Panc1 (cell line): ENCODE measurements at regions of chr12 and their contacts with region 1.

Region 1: DNA sequence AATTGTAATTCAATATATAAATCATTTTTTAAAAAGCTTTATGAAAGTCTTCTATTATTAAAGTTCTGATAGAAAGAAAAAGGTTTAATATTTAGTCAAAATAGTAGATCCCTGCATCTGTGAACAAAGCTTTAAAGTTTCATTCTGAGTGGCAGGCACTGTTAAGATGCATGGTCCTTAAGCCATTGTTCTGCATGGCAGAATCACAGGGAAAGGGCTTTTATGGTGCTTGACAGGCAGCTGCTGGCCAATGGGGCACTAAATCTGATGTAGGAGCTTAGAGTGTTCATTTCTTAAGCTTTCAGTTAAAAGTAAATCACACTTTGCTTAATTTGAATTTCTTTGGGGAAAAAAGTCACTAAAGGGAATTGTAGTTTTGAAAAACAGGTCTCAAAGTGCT is 148.2 kb downstream of the PLEKHA5 start:
- DNase-seq: no peak
- ATAC-seq: no peak
- H3K4me3 ChIP-seq: no peak overlapping the region
- H3K27ac ChIP-seq: no peak overlapping the region
- H3K4me1 ChIP-seq: peaks cover 11% of the 10 kb centered on the region
- H3K27me3 ChIP-seq: no peaks in the 10 kb centered on the region
- CTCF ChIP-seq: no peak

Region 2: DNA sequence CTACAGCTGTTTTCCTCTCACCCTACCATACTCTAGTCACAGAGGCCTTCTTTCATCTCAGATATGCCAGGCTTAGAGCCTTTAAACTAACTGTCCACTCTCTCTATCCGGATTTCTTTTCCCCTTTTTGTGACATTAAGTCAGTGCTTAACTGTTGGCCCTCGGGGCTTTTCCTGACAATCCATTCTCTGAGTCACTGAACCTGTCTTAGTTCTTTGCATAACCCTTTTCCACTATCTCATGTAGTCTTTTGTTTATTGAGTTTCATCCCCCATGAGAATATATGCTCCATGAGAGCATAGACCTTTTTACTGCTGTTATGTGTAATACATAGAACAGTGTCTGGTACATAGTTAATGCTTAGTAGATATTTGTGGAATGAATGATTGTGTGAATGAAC is 79.4 kb before region 1 on chr12:
- CTCF ChIA-PET with region 1: no interaction called
- POLR2A ChIA-PET with region 1: no interaction called
- in situ Hi-C with region 1: no loop called
- intact Hi-C with region 1: no loop called
- DNase-seq: no peak
- ATAC-seq: no peak
- H3K4me3 ChIP-seq: no peak overlapping the region
- H3K27ac ChIP-seq: no peak overlapping the region
- H3K4me1 ChIP-seq: no peaks in the 10 kb centered on the region
- H3K27me3 ChIP-seq: no peaks in the 10 kb centered on the region
- CTCF ChIP-seq: no peak

Region 3: DNA sequence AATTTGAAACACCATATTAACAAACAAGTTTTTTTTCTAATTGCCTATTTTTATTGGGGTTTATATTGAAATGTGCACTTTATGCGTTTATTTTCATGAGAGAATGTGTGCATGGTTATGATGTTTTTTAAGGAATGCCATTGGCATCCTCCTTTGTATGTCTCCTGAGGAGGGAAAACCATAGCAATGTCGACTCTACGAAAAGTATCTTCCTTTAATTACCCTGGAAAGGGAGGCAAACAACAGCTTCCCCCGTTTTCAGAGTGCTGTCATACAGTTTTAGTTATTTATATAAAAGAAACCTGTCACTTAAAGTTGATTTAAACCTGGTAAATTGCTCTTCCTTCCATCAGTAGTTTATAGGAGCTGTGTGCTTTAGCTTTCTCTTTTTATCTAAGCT is 30.8 kb before region 1 on chr12:
- CTCF ChIA-PET with region 1: no interaction called
- POLR2A ChIA-PET with region 1: interaction called, 23 read pairs
- in situ Hi-C with region 1: no loop called
- intact Hi-C with region 1: no loop called
- DNase-seq: no peak
- ATAC-seq: no peak
- H3K4me3 ChIP-seq: no peak overlapping the region
- H3K27ac ChIP-seq: no peak overlapping the region
- H3K4me1 ChIP-seq: no peaks in the 10 kb centered on the region
- H3K27me3 ChIP-seq: no peaks in the 10 kb centered on the region
- CTCF ChIP-seq: no peak

Region 4: GRCh38 chr12:19323805-19324204 is 46.1 kb after region 1 on chr12:
- CTCF ChIA-PET with region 1: no interaction called
- POLR2A ChIA-PET with region 1: no interaction called
- in situ Hi-C with region 1: no loop called
- intact Hi-C with region 1: no loop called
- DNase-seq: no peak
- ATAC-seq: no peak
- H3K4me3 ChIP-seq: no peak overlapping the region
- H3K27ac ChIP-seq: no peak overlapping the region
- H3K4me1 ChIP-seq: no peaks in the 10 kb centered on the region
- H3K27me3 ChIP-seq: no peaks in the 10 kb centered on the region
- CTCF ChIP-seq: no peak